ENCODE measurements at regions of chr4 and their contacts with region 1.

Region 1: GRCh38 chr4:184733654-184734524 is at the start of gene CENPU:
- DNase-seq: peak; percentile 97
- ATAC-seq: peak; percentile 95
- H3K4me3 Mint-ChIP-seq: peak within 1 kb of the TSS; percentile 91
- H3K27ac Mint-ChIP-seq: peak within 1 kb of the TSS; percentile 92
- H3K4me1 Mint-ChIP-seq: peaks cover 36% of the 10 kb centered on the region
- H3K27me3 Mint-ChIP-seq: peaks cover 8% of the 10 kb centered on the region
- CTCF ChIP-seq: no peak
- total RNA-seq, gene CENPU: 52.9 to 60.5 TPM (median 53.4 TPM) in 3 replicates

Region 2: GRCh38 chr4:184617561-184618196 is 116.2 kb before region 1 on chr4:
- CTCF ChIA-PET with region 1: no interaction called
- POLR2A ChIA-PET with region 1: interaction called, 10 read pairs
- DNase-seq: peak; percentile 42
- ATAC-seq: peak; percentile 65
- H3K4me3 Mint-ChIP-seq: peak overlapping the region; percentile 43
- H3K27ac Mint-ChIP-seq: peak overlapping the region; percentile 87
- H3K4me1 Mint-ChIP-seq: peaks cover 26% of the 10 kb centered on the region
- H3K27me3 Mint-ChIP-seq: peaks cover 2% of the 10 kb centered on the region; the same call in 1 of the 2 replicates
- CTCF ChIP-seq: no peak

Region 3: GRCh38 chr4:184649026-184649970 is 84.6 kb before region 1 on chr4 and contains the starts of genes CASP3 and PRIMPOL:
- CTCF ChIA-PET with region 1: interaction called, 9 read pairs
- POLR2A ChIA-PET with region 1: interaction called, 11 read pairs
- DNase-seq: peak; percentile 95
- ATAC-seq: peak; percentile 90
- H3K4me3 Mint-ChIP-seq: peak within 1 kb of the TSS; percentile 88
- H3K27ac Mint-ChIP-seq: peak within 1 kb of the TSS; percentile 96
- H3K4me1 Mint-ChIP-seq: peaks cover 67% of the 10 kb centered on the region
- H3K27me3 Mint-ChIP-seq: no peaks in the 10 kb centered on the region
- CTCF ChIP-seq: no peak
- total RNA-seq, gene CASP3: 54.2 to 78.9 TPM (median 63.2 TPM) in 3 replicates
- total RNA-seq, gene PRIMPOL: 8.3 to 13.4 TPM (median 9.6 TPM) in 3 replicates

Region 4: GRCh38 chr4:184745831-184746795 is 12.2 kb after region 1 on chr4:
- CTCF ChIA-PET with region 1: interaction called, 20 read pairs
- POLR2A ChIA-PET with region 1: interaction called, 16 read pairs
- DNase-seq: peak; percentile 64
- ATAC-seq: peak; percentile 31; the same call in 1 of the 2 replicates
- H3K4me3 Mint-ChIP-seq: no peak overlapping the region
- H3K27ac Mint-ChIP-seq: 0 out of 2 replicates have a peak overlapping the region, but pooled peaks have one; percentile 9
- H3K4me1 Mint-ChIP-seq: peaks cover 41% of the 10 kb centered on the region
- H3K27me3 Mint-ChIP-seq: peaks cover 7% of the 10 kb centered on the region; the same call in 1 of the 2 replicates
- CTCF ChIP-seq: peak; percentile 57

Region 5: GRCh38 chr4:184762100-184762499 is 28.2 kb after region 1 on chr4:
- CTCF ChIA-PET with region 1: no interaction called
- POLR2A ChIA-PET with region 1: no interaction called
- DNase-seq: no peak
- ATAC-seq: no peak
- H3K4me3 Mint-ChIP-seq: no peak overlapping the region
- H3K27ac Mint-ChIP-seq: no peak overlapping the region
- H3K4me1 Mint-ChIP-seq: no peaks in the 10 kb centered on the region
- H3K27me3 Mint-ChIP-seq: peaks cover 2% of the 10 kb centered on the region; the same call in 1 of the 2 replicates
- CTCF ChIP-seq: no peak

Measured in WTC11 (cell line).